ENCODE measurements at regions of chr10 and their contacts with region 1.

Region 1: DNA sequence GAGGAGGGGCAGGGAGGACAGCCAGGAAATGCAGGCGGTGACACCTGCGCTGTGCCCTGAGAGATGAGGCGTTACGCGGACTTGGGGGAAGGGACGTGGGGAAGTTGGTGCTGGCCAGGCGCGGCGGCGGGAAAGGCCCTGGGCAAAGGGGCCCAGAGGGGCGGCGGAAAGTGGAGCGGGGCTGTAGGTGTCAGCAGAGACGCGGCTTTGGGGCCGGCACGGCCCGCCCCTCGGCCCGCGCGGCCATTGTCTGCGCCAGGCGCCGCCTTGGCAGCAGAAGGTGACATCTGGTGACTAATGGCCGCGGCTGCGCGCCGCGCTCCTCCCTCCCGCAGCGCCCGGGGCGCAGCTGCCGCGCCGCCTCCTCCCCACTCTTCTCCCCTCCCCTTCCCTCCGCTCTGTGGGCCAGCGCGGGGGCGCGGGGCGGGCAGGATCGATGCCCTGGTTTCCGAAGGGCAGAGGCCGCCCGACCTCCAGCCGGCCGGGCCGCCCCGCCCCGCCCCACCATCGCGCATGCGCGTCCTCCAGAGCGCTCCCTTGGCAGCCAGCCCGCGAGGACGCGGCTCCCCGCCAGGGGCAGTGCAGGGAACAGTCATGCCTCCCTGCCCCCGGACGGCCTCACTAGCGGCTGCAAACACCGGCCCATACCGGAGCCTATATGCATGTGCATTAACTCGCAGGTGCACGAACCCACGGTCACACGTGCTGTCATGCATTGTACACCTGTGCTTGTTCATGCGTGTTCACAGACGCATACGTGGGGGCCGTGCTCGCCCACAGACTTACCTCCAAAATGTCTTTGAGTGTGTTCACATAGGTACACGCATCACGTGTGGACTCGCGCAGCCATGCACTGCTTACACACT is 269.6 kb downstream of the RPS24 start:
- DNase-seq: peak; percentile 99
- ATAC-seq: peak; percentile 92
- H3K4me3 Mint-ChIP-seq: peak overlapping the region; percentile 88
- H3K27ac Mint-ChIP-seq: peak overlapping the region; percentile 96
- H3K4me1 Mint-ChIP-seq: peaks cover 15% of the 10 kb centered on the region
- H3K27me3 Mint-ChIP-seq: peaks cover 22% of the 10 kb centered on the region

Region 2: DNA sequence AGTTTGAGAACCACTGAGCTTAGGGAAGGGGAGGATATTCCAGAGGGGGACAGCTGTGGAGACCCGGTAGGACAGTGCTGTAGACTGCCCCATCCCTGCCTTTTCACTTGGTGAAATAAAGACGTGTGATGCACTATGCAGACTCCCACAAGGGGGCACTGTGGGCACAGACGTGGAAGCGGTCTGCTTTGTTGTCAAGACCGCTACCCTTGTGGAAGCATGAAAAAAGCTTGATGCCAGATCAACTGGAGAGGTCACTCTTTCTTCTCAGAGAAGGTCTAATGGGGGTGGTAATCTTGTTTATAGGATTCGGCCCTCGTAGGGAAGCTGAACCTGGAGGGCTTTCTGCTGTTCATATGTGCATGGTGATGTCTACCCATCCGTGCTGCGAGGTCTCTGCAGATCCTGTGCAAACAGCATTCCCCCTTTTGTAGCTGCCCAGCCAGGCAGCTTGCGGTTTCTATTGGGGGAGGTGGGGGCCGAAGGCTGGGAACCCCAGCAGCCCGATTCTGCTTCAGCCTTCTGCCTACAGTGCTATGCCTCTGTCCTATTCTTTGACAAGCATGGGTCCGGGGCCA is 255.8 kb before region 1 on chr10:
- POLR2A ChIA-PET with region 1: interaction called, 12 read pairs
- DNase-seq: peak; percentile 86
- ATAC-seq: peak; percentile 88
- H3K4me3 Mint-ChIP-seq: no peak overlapping the region
- H3K27ac Mint-ChIP-seq: peak overlapping the region; percentile 59
- H3K4me1 Mint-ChIP-seq: peaks cover 16% of the 10 kb centered on the region
- H3K27me3 Mint-ChIP-seq: no peaks in the 10 kb centered on the region

Region 3: DNA sequence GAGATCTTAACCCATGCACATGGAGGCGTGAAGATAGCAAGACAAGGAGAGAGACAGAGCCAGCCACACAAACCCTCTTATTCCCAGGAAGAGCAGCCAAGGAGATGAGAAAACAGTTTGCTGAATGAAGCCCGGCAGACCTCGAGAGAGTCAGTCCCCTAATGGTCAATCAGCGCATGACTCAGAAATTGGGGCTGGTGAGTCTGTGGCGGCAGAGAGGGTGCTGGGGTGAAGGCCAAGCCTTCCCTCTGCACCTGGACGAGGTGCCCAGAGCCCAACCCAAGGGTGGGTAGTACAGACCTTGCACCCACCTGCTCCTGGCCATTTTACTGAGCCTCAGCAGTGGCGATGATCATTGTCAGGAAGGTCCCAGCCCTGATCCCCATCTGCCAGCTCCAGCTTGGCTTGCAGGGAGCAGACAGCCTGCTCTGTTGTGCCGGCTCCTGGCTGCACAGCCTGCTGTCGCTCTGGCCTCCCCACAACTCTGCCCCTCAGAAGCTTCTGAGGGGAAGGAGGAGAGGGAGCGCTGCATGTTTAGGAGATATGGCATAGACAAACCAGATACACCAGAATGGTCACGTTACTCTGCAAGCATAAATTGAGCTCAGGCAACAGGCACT is 13.0 kb before region 1 on chr10:
- POLR2A ChIA-PET with region 1: no interaction called
- DNase-seq: no peak
- ATAC-seq: no peak
- H3K4me3 Mint-ChIP-seq: no peak overlapping the region
- H3K27ac Mint-ChIP-seq: no peak overlapping the region
- H3K4me1 Mint-ChIP-seq: no peaks in the 10 kb centered on the region
- H3K27me3 Mint-ChIP-seq: peaks cover 7% of the 10 kb centered on the region